Mammary epithelial cell (primary cell): ENCODE measurements at regions of chr7 and their contacts with region 1.

Region 1: DNA sequence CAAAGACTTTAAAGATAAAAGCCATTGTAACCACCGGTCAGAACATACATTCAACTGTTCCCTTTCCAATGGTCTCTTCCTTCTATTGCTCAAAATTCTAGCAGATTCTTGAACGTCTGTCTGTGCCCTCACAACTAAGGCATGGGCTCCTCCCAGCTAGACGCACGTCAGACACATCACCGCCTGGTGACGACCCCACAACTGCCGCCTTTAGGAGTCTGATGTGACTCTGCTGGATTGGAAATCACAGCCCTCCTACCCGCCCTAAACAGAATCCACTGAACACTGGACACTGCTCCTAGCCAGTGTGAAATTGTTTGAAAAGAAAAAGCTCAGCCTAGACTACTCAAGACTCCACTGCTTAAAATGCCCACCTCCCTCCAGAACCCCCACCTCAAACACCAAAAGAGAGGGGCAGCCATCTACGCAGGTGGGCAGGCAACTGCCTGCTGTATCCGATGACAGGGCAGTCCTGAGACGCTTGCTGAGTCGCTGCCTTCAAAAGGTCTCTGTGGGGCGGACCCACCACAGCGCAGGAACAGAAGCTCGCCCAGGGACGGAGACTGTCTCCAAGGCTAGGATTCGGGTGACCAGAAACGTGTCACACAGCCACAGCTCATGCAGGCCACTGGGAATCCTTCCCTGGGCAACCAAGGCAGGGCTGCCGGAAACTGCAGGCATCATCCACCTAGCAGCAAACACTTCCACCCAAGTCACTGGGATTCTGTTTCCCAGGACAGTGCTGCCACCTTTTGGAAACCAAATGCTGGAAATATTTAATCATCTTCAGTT is 34.7 kb downstream of the GSDME start:
- DNase-seq: no peak
- H3K4me3 ChIP-seq: no peak overlapping the region
- H3K27ac ChIP-seq: no peak overlapping the region
- H3K4me1 ChIP-seq: peaks cover 15% of the 10 kb centered on the region
- H3K27me3 ChIP-seq: no peaks in the 10 kb centered on the region
- CTCF ChIP-seq: peak; percentile 18 to 45

Region 2: DNA sequence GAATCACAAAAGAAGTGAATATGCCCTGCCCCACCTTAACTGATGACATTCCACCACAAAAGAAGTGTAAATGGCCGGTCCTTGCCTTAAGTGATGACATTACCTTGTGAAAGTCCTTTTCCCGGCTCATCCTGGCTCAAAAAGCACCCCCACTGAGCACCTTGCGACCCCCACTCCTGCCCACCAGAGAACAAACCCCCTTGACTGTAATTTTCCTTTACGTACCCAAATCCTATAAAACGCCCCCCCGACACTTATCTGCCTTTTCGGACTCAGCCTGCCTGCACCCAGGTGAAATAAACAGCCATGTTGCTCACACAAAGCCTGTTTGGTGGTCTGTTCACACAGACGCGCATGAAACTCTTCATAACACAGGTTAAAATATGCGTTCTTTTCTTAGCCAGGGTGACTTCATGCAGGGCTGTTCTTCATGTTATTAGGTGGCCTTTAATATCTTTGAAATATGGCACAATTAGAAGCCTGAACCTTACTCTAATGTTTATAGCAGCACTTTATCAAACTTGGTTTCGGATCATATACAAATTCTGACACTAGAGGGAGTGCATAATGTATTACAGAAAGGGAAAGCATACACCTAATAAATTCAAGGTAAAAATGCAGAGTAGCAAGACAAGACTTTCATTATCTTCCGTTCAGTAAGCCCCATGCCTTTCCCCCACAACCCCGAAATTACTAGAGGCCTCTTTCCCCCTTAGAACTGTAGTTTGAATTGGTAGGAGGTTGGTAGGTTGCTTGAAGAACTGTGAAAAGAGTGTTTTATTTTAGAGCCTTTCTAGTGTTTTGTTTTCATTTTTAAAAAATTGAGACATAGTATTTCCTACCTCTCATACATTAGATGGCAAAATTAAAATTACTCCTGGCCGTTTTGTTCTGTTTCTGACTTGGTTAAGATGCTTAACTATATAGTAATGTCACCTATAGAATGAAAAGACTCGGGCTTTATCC is 320.7 kb before region 1 on chr7:
- CTCF ChIA-PET with region 1: no interaction called
- dilution Hi-C with region 1: no loop called
- in situ Hi-C with region 1: no loop called
- intact Hi-C with region 1: loop called (anchors 5 kb)
- DNase-seq: peak; percentile 30
- H3K4me3 ChIP-seq: peak overlapping the region; percentile 29 to 40 (median 35)
- H3K27ac ChIP-seq: peak overlapping the region; percentile 33
- H3K4me1 ChIP-seq: peaks cover 16% of the 10 kb centered on the region
- H3K27me3 ChIP-seq: no peaks in the 10 kb centered on the region
- CTCF ChIP-seq: peak; percentile 45 to 61

Region 3: GRCh38 chr7:24741691-24742504 is 19.3 kb after region 1 on chr7:
- CTCF ChIA-PET with region 1: interaction called, 12 read pairs
- dilution Hi-C with region 1: no loop called
- in situ Hi-C with region 1: no loop called
- intact Hi-C with region 1: no loop called
- DNase-seq: peak; percentile 90
- H3K4me3 ChIP-seq: no peak overlapping the region
- H3K27ac ChIP-seq: peak overlapping the region; percentile 89
- H3K4me1 ChIP-seq: peaks cover 20% of the 10 kb centered on the region
- H3K27me3 ChIP-seq: no peaks in the 10 kb centered on the region
- CTCF ChIP-seq: no peak

Region 4: DNA sequence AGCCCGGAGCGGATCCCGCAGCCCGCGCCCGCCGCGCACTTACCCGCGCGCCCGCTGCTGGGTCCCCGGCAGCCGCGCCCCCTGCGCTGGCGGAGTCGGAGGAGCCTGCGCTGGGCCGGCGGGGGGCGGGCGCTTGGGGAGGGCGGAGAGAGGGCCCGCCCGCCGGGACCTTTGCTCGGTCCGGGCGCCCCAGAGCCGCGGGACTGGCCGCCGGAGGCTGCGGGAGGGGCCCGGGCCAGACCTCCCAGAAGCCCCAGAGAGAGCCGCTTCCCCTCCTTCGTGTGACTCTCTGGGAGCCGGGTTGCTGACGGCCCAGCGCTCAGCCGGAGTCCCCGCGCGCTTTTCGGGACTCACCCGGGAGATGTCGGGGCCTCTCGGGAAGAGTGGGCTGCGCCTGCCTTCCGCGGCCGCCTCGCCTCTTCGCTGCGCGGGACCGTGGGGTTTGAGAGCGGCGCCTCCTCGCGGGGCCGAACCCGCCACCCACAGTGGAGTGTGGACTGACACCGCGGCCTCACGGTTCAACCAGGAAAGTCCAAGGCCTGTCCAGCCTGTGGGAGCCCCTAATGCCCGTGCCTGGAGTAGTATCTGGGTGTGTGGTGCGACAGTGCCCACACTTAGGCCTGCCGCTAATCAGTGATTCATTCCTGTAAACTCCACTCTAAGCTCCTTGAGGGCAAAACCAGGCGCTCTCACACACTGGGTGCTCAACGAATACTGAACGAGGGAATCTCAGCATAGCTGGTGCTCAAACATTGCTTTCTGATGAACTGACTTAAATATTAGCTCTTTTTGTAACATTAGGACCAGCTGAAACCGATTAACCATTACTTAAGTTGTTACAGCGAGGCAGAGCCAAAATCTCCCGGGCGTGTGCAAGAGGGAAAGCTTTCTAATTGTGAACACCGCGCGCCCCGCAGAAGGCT is 35.0 kb after region 1 on chr7 and contains the start of gene GSDME:
- CTCF ChIA-PET with region 1: no interaction called
- dilution Hi-C with region 1: no loop called
- in situ Hi-C with region 1: no loop called
- intact Hi-C with region 1: loop called (anchors 1 kb)
- DNase-seq: peak; percentile 70
- H3K4me3 ChIP-seq: peak within 1 kb of the TSS; percentile 66 to 73 (median 66)
- H3K27ac ChIP-seq: peak within 1 kb of the TSS; percentile 97
- H3K4me1 ChIP-seq: peaks cover 37% of the 10 kb centered on the region
- H3K27me3 ChIP-seq: no peaks in the 10 kb centered on the region
- CTCF ChIP-seq: peak in 1 of 2 donors; percentile 24
- total RNA-seq, gene GSDME: 76.8 to 95.6 TPM

Region 5: GRCh38 chr7:24896031-24896501 is 173.5 kb after region 1 on chr7:
- CTCF ChIA-PET with region 1: no interaction called
- dilution Hi-C with region 1: no loop called
- in situ Hi-C with region 1: no loop called
- intact Hi-C with region 1: no loop called
- DNase-seq: no peak
- H3K4me3 ChIP-seq: no peak overlapping the region
- H3K27ac ChIP-seq: no peak overlapping the region
- H3K4me1 ChIP-seq: peaks cover 20% of the 10 kb centered on the region
- H3K27me3 ChIP-seq: no peaks in the 10 kb centered on the region
- CTCF ChIP-seq: no peak

Region 6: DNA sequence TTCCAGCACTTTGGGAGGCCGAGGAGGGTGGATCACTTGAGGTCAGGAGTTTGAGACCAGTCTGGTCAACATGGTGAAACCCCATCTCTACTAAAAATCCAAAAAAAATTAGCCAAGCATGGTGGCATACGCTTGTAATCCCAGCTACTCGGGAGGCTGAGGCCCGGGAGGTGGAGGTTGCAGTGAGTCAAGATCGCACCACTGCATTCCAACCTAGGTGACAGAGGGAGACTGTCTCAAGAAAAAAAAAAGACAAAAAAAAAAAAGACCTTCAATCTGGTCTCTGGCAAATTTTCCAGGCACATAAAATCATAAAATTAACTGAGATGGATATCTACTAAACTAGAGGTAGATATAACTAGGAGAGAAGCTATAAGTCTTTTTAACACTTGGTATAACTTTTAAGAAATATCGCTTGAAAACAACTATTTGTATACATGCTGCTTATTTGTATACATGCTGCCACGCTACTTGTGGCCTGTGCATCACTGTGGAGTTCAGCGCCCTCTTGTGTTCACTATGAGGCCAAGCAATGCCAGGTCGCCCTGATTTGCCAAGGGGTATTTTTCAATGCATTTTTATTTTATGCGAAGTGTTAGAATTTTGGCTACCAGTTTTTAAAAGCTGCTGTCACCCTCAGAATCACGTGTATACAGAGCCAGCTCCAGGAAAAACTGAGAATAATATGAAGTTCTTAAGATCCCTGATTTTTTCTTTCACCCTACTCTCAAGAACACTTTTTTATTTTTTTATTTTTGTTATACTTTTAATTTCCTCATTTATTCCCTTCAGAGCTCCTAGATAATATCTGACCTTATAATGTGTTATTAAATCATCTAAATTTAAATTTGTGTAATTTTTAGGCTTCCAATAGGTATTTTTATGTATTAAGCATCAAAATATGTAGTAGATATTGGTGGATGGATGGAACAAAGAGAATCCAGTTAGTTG is 375.8 kb after region 1 on chr7:
- CTCF ChIA-PET with region 1: interaction called, 3 read pairs
- dilution Hi-C with region 1: no loop called
- in situ Hi-C with region 1: no loop called
- intact Hi-C with region 1: loop called (anchors 5 kb)
- DNase-seq: peak; percentile 31
- H3K4me3 ChIP-seq: no peak overlapping the region
- H3K27ac ChIP-seq: no peak overlapping the region
- H3K4me1 ChIP-seq: peaks cover 3% of the 10 kb centered on the region
- H3K27me3 ChIP-seq: no peaks in the 10 kb centered on the region
- CTCF ChIP-seq: peak; percentile 94 to 98